Posterior cingulate gyrus (tissue), 11 donors: ENCODE measurements at regions of chr10 and their contacts with region 1.

Region 1: DNA sequence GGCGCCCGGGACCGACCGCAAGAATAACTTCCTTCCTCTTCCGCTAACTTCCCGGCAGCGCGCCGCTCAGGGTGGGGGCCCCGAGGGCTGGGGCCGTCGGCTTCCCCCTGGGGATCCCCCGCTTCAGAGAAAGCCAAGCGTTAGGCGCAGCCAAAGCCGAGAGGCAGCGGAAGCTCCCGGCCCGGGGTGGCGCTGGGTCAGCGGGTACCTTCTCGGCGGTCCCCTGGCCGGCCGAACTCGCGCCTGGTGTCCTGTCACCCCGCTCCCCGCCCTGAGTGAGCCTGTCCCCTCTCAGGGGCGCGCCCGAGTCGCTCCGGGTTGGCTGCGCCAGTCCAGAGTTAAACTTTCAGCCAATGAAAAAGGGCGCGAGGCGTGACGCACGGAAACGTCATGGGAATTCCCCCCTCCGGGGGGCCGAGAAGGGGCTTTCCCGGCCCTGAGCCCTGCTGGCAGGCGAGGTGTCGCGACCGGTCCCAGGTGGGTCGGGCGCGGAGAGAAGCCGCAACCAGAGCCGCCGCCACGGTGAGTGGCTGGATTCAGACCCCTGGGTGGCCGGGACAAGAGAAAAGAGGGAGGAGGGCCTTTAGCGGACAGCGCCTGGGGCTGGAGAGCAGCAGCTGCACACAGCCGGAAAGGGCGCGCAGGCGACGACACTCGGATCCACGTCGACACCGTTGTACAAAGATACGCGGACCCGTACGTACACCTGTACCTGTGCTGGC is 1.3 kb upstream of the NFKB2 start:
- DNase-seq: peak; percentile 69 to 97 (median 84)

Region 2: DNA sequence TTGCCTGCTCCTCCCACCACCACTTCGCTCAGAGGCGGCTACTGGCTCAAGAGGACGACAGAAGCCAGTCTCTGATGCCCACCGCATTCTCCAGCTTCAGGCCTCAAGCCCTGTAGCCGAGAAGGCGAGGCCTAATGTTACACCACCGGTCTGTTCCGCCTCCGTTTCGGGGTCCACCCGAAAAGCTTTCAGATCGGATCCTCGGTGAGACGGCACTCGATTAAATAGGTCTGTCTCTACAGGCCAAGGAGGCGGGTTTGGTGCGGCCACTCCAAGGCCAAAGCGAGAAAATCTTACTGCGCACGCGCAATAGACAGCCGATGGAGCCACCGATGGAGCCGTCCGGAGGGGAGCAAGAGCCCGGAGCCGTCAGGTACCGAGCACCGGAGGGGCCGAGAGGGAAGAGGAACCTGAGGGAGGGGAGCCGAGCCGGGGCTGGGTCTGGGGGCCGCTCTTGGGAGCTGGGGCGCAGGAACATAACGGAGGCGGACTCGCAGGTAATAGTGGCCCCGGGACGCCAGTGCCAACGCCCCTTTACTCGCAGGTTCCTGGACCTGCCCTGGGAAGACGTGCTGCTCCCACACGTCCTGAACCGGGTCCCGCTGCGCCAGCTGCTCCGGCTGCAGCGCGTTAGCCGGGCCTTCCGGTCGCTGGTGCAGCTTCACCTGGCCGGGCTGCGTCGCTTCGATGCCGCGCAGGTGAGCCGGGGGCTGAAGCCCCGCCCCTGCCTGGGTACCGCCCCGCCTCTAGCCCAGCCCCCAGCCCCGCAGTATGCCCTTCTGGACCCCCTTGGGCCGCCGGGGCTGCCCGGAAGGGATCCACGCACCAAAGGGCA is 26.8 kb after region 1 on chr10 and contains the start of gene FBXL15:
- intact Hi-C with region 1: loop called (anchors 1 kb)
- DNase-seq: peak; percentile 89 to 99 (median 94)

Region 3: GRCh38 chr10:102479651-102480050 is 85.4 kb after region 1 on chr10:
- intact Hi-C with region 1: loop called (anchors 2 kb)
- DNase-seq: peak in 1 of 10 donors; percentile 64

Region 4: GRCh38 chr10:102583435-102584417 is 189.5 kb after region 1 on chr10:
- intact Hi-C with region 1: loop called (anchors 5 kb)
- DNase-seq: peak; percentile 81 to 98 (median 90)